Colonic mucosa (tissue), 4 donors: ENCODE measurements at regions of chr19 and their contacts with region 1.

Region 1: GRCh38 chr19:36665832-36666231 is 805 bp downstream of the ZNF461 start:
- DNase-seq: no peak
- H3K4me3 ChIP-seq: peak overlapping the region; percentile 67
- H3K27ac ChIP-seq: no peak overlapping the region
- H3K4me1 ChIP-seq: no peaks in the 10 kb centered on the region
- H3K27me3 ChIP-seq: no peaks in the 10 kb centered on the region
- CTCF ChIP-seq: no peak

Region 2: DNA sequence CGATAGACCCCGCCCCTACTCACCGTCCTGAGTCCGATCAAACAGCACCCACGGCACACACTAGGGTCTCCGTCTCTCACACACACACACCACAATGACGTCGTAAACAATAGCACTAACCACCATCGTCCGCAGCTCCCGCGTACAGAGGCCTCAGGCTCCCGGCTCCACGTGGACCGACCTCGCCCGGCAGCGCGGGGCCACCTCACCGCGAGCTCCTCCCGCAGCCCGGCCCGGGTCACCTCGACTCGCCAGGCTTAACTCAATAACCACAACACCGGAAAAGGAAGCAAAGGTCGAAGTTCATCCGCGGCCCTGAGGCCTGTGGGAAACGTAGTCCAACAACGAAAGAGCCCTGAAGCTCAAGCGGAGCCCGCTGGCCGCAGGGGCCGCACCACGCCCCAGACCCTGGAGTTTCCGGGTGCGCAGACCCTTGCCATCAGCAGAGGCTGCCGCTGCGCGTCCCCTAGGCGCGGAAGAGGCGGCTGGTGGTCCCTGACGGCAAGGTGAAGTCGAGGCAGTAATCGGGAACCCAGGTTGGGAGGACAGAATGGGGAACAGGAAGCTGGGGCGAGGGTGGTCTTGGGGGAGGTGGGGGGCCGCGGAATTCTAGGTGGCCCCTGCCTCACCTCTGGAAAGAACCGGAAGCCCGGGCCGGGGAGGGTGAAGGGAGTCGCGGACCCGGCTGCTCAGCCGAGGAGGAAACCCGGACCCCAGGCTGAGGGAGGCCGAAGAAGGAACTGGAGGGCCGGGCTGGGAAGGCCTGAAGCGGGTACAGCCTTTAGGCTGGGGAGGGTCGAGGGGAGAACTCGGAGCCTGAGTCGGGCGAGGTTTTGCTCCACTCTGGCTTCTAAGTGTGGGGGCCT is 92.6 kb before region 1 on chr19 and contains the start of gene ZNF529:
- intact Hi-C with region 1: loop called (anchors 5 kb)
- DNase-seq: peak; percentile 93
- H3K4me3 ChIP-seq: peak within 1 kb of the TSS; percentile 72
- H3K27ac ChIP-seq: peak within 1 kb of the TSS; percentile 61
- H3K4me1 ChIP-seq: peaks cover 9% of the 10 kb centered on the region
- H3K27me3 ChIP-seq: no peaks in the 10 kb centered on the region
- CTCF ChIP-seq: no peak
- total RNA-seq, gene ZNF529: 2.1 to 5.0 TPM

Region 3: DNA sequence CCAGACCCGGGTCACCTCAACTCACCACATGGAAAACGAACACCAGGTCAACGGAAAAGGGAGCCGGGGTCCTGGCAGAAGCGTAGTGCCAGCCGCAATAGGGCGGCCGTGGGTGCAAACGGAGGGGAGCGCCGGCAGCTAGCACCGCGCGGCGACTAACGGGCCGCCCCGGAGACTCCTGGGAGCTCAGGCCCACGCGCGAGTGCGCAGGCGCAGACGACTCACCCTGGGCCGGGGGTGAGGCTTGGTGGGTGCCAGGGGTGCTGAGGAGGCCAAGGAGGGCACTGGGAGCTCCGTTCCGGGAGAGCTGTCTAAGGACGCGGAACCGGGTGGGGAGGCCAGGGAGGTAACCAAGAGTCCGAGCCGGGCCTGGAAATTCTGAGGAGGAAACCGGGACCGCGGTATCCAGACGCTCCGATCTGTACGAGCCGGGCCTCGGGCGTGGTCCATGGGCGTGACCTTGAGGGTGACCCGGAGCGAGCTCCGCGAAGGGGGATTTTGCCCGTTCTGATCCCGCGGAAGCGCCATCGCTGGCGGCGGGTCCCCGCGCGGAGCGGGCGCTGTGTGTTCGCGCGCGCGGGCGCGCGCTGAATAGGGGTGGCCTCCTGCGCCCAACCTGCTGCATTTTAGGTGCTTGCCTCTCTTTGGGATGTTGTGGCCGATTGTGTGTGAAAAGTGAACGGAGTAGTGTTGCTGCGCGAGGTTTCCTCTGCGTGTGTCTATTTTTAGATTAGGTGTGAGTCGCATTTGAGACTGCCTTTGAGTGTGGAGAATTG is 60.5 kb before region 1 on chr19 and contains the start of gene ZNF382:
- intact Hi-C with region 1: no loop called
- DNase-seq: peak; percentile 63
- H3K4me3 ChIP-seq: peak within 1 kb of the TSS; percentile 49
- H3K27ac ChIP-seq: peak within 1 kb of the TSS; percentile 11
- H3K4me1 ChIP-seq: no peaks in the 10 kb centered on the region
- H3K27me3 ChIP-seq: no peaks in the 10 kb centered on the region
- CTCF ChIP-seq: no peak
- total RNA-seq, gene ZNF382: 0.37 to 1.9 TPM

Region 4: DNA sequence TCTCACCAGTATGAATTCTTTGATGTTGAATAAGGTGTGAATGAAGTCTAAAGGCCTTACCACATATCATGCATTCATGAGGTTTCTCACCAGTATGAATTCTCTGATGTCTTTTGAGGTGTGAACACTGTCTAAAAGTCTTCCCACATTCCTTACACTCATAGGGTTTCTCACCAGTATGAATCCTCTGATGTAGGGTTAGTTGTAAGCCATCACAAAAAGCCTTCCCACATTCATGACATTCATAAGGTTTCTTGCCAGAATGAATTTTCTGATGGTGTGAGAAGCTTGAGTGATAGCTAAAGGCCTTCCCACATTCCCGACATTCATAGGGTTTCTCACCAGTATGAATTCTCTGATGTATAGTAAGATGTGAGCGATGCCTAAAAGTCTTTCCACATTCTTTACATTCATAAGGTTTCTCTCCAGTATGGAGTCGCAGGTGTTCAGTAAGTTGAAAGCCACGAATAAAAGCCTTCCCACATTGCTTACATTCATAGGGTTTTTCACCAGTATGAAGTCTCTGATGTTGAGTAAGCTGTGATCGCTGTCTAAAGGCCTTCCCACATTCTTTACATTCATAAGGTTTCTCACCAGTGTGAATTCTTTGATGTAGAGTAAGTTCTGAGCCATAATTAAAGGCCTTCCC is 26.8 kb before region 1 on chr19:
- intact Hi-C with region 1: no loop called
- DNase-seq: no peak
- H3K4me3 ChIP-seq: no peak overlapping the region
- H3K27ac ChIP-seq: no peak overlapping the region
- H3K4me1 ChIP-seq: no peaks in the 10 kb centered on the region
- H3K27me3 ChIP-seq: no peaks in the 10 kb centered on the region
- CTCF ChIP-seq: no peak

Region 5: DNA sequence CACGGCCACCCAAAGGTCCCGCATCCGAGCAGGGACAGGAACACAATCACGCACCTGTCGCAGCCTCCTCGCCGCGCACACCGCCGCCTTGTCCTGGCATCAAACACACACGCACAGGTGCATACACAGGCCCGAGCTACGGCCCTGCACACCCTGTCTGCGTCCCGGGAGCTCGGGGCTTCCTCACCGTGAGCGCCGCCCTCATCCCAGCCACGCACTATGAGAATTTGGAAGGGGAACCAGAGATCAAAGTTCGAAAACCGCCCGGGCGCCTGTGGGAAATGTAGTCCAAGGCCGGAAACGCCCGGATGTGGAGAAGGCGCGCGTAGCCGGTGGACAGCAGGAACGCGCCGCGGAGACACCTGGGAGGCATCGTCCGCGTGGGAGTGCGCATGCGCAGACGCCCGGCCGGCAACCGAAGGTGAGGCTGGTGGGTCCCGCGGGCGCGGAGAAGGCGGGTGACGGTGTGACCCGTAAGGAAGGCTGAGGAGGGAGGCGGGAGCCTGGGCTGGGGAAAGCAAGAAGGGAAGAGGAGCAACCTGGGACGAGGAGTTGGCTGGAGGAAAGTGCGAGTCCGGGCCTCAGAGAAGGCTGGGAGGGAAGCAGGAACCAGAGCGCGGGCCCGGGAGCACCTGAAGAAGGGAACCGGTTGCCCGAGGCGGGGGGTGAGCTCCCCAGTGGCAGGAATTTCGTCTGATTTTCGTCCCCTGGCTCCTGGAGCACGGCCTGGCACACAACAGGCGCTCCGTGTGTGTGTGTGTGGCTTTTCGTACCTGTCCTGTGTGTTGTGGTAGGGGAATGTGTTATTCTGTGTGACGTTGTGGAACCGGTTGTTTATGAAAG is 21.6 kb after region 1 on chr19 and contains the start of gene ZNF567:
- intact Hi-C with region 1: loop called (anchors 2 kb)
- DNase-seq: peak; percentile 99
- H3K4me3 ChIP-seq: peak within 1 kb of the TSS; percentile 95
- H3K27ac ChIP-seq: peak within 1 kb of the TSS; percentile 41
- H3K4me1 ChIP-seq: peaks cover 4% of the 10 kb centered on the region
- H3K27me3 ChIP-seq: no peaks in the 10 kb centered on the region
- CTCF ChIP-seq: no peak
- total RNA-seq, gene ZNF567: 2.7 to 4.6 TPM